ENCODE measurements at regions of chr22 and their contacts with region 1.

Region 1: GRCh38 chr22:49852898-49853894 is at the start of gene ZBED4:
- DNase-seq: peak; percentile 97
- ATAC-seq: peak; percentile 73
- H3K4me3 ChIP-seq: peak within 1 kb of the TSS; percentile 87
- H3K27ac ChIP-seq: peak within 1 kb of the TSS; percentile 82
- H3K4me1 ChIP-seq: peaks cover 11% of the 10 kb centered on the region; the same call in 1 of the 2 replicates
- H3K27me3 ChIP-seq: peaks cover 13% of the 10 kb centered on the region
- CTCF ChIP-seq: no peak
- total RNA-seq, gene ZBED4: 11.5 and 14.3 TPM in 2 replicates

Region 2: DNA sequence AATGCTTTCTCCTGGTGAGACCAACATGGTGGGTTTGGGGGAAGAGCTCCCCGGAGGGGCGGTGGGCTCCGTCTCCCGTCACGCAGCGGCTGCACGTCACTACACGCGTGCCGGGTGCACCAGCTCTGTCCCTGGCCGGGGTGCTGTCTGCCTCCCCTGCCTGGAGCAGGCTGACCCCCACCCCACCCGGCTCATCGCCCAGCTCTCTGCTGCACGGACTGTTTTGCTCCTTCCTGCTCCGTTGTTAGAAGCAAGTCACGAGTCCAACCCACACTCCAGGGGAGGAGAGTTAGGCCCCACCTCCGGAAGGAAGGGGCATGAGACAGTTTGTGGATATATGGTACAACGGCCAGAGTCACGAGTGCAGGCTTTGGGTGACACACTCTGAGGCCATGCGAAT is 390.4 kb before region 1 on chr22:
- CTCF ChIA-PET with region 1: no interaction called
- POLR2A ChIA-PET with region 1: no interaction called
- intact Hi-C with region 1: no loop called
- DNase-seq: no peak
- ATAC-seq: no peak
- H3K4me3 ChIP-seq: no peak overlapping the region
- H3K27ac ChIP-seq: no peak overlapping the region
- H3K4me1 ChIP-seq: no peaks in the 10 kb centered on the region
- H3K27me3 ChIP-seq: peaks cover 78% of the 10 kb centered on the region
- CTCF ChIP-seq: no peak

Region 3: GRCh38 chr22:49827853-49828598 is 25.2 kb before region 1 on chr22 and contains the start of gene BRD1:
- CTCF ChIA-PET with region 1: no interaction called
- POLR2A ChIA-PET with region 1: no interaction called
- intact Hi-C with region 1: loop called (anchors 2 kb)
- DNase-seq: peak; percentile 67
- ATAC-seq: peak; percentile 70
- H3K4me3 ChIP-seq: peak within 1 kb of the TSS; percentile 95
- H3K27ac ChIP-seq: no peak within 1 kb of the TSS
- H3K4me1 ChIP-seq: peaks cover 17% of the 10 kb centered on the region
- H3K27me3 ChIP-seq: no peaks in the 10 kb centered on the region
- CTCF ChIP-seq: no peak
- total RNA-seq, gene BRD1: 19.1 and 23.0 TPM in 2 replicates

Region 4: GRCh38 chr22:49917974-49918910 is 65.0 kb after region 1 on chr22 and contains the starts of genes ALG12 and CRELD2:
- CTCF ChIA-PET with region 1: no interaction called
- POLR2A ChIA-PET with region 1: no interaction called
- intact Hi-C with region 1: loop called (anchors 5 kb)
- DNase-seq: peak; percentile 91
- ATAC-seq: peak; percentile 94
- H3K4me3 ChIP-seq: peak within 1 kb of the TSS; percentile 78
- H3K27ac ChIP-seq: peak within 1 kb of the TSS; percentile 65
- H3K4me1 ChIP-seq: peaks cover 12% of the 10 kb centered on the region
- H3K27me3 ChIP-seq: no peaks in the 10 kb centered on the region
- CTCF ChIP-seq: no peak
- total RNA-seq, gene ALG12: 10.7 and 12.1 TPM in 2 replicates
- total RNA-seq, gene CRELD2: 71.3 and 85.6 TPM in 2 replicates